CD8-positive, alpha-beta T cell (primary cell): ENCODE measurements at regions of chr17 and their contacts with region 1.

Region 1: GRCh38 chr17:3282901-3283300 is 15.3 kb downstream of the OR3A1 start:
- DNase-seq: no peak
- ATAC-seq: no peak
- H3K4me3 ChIP-seq: no peak overlapping the region
- H3K4me3 Mint-ChIP-seq: no peak overlapping the region
- H3K27ac ChIP-seq: no peak overlapping the region
- H3K27ac Mint-ChIP-seq: no peak overlapping the region
- H3K4me1 ChIP-seq: no peaks in the 10 kb centered on the region
- H3K4me1 Mint-ChIP-seq: no peaks in the 10 kb centered on the region
- H3K27me3 ChIP-seq: no peaks in the 10 kb centered on the region
- H3K27me3 Mint-ChIP-seq: peaks cover 12% of the 10 kb centered on the region
- CTCF ChIP-seq: no peak

Region 2: GRCh38 chr17:2853111-2853721 is 429.7 kb before region 1 on chr17:
- CTCF ChIA-PET with region 1: no interaction called
- POLR2A ChIA-PET with region 1: no interaction called
- intact Hi-C with region 1: no loop called
- DNase-seq: peak in 7 of 9 experiments; percentile 9 to 58 (median 37)
- ATAC-seq: peak; percentile 35
- H3K4me3 ChIP-seq: peak overlapping the region; percentile 18 to 27
- H3K4me3 Mint-ChIP-seq: peak overlapping the region; percentile 61
- H3K27ac ChIP-seq: no peak overlapping the region
- H3K27ac Mint-ChIP-seq: no peak overlapping the region
- H3K4me1 ChIP-seq: peaks cover 12% of the 10 kb centered on the region
- H3K4me1 Mint-ChIP-seq: peaks cover 20% of the 10 kb centered on the region
- H3K27me3 ChIP-seq: peaks cover 4 to 12% of the 10 kb centered on the region in 2 experiments
- H3K27me3 Mint-ChIP-seq: peaks cover 43% of the 10 kb centered on the region
- CTCF ChIP-seq: no peak

Region 3: GRCh38 chr17:3308603-3309002 is 25.7 kb after region 1 on chr17:
- CTCF ChIA-PET with region 1: no interaction called
- POLR2A ChIA-PET with region 1: no interaction called
- intact Hi-C with region 1: loop called in 1 of 2 experiments (anchors 2 kb)
- DNase-seq: no peak
- ATAC-seq: no peak
- H3K4me3 ChIP-seq: no peak overlapping the region
- H3K4me3 Mint-ChIP-seq: no peak overlapping the region
- H3K27ac ChIP-seq: no peak overlapping the region
- H3K27ac Mint-ChIP-seq: no peak overlapping the region
- H3K4me1 ChIP-seq: no peaks in the 10 kb centered on the region
- H3K4me1 Mint-ChIP-seq: no peaks in the 10 kb centered on the region
- H3K27me3 ChIP-seq: no peaks in the 10 kb centered on the region
- H3K27me3 Mint-ChIP-seq: peaks cover 3% of the 10 kb centered on the region
- CTCF ChIP-seq: no peak

Region 4: DNA sequence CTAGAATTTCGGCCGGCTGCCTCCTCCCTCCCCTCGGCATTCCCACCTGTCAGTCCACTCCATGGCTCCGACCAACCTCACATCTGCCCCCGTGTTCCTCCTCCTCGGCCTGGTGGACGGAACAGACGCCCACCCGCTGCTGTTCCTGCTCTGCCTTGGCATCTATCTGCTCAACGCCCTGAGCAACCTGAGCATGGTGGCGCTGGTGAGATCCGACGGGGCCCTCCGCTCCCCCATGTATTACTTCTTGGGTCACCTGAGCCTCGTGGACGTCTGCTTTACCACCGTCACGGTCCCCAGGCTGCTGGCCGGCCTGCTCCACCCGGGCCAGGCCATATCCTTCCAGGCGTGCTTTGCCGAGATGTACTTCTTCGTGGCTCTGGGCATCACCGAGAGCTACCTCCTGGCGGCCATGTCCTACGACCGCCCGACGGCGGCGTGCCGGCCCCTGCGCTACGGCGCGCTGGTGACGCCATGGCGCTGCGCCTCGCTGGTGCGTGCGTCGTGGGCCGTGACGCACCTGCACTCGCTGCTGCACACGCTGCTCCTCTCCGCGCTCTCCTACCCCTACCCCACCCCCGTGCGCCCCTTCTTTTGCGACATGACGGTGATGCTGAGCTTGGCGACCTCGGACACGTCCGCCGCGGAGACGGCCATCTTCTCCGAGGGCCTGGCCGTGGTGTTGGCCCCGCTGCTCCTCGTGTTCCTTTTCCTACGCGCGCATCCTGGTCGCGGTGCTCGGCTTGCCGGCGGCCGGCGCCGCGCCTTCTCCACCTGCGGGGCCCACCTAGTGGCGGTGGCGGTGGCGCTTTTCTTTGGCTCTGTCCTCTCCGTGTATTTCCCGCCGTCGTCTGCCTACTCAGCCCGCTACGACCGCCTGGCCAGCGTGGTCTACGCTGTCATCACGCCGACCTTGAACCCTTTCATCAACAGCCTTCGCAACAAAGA is 103.2 kb after region 1 on chr17 and contains the start of gene OR3A2:
- CTCF ChIA-PET with region 1: no interaction called
- POLR2A ChIA-PET with region 1: no interaction called
- intact Hi-C with region 1: no loop called
- DNase-seq: peak in 4 of 9 experiments; percentile 2 to 73 (median 25)
- ATAC-seq: peak; percentile 90
- H3K4me3 ChIP-seq: peak within 1 kb of the TSS in 1 of 2 experiments; percentile 32
- H3K4me3 Mint-ChIP-seq: peak within 1 kb of the TSS; percentile 75
- H3K27ac ChIP-seq: peak within 1 kb of the TSS; percentile 8 to 15
- H3K27ac Mint-ChIP-seq: peak within 1 kb of the TSS; percentile 53
- H3K4me1 ChIP-seq: no peaks in the 10 kb centered on the region
- H3K4me1 Mint-ChIP-seq: no peaks in the 10 kb centered on the region
- H3K27me3 ChIP-seq: peaks cover 0 to 5% of the 10 kb centered on the region in 2 experiments
- H3K27me3 Mint-ChIP-seq: peaks cover 37% of the 10 kb centered on the region
- CTCF ChIP-seq: no peak
- total RNA-seq, gene OR3A2: 0.35 to 1.0 TPM